Right cardiac atrium (tissue), 5 donors: ENCODE measurements at regions of chr16 and their contacts with region 1.

Region 1: DNA sequence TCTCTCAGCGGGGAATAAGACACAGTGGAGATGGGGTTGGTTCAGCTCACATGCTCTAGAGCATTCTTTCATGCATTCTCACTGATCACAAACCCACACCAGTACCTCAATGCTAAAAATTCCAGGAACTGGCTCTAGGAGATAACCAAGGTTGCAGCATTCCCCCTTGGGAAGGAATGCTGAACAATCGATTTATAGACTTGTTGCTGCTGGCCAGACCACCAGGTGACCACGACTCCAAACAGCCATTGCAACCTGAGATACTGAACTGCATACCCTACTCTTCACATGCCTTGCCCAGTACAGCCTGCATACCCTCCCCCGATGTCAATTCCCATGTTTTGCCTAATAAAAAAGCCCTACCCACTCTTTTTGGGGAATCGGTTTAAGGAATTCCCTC is 75.1 kb upstream of the GPRC5B start:
- DNase-seq: no peak
- ATAC-seq: no peak
- H3K4me3 ChIP-seq: no peak overlapping the region
- H3K27ac ChIP-seq: no peak overlapping the region
- H3K4me1 ChIP-seq: no peaks in the 10 kb centered on the region
- H3K27me3 ChIP-seq: no peaks in the 10 kb centered on the region

Region 2: GRCh38 chr16:19933740-19934139 is 26.0 kb before region 1 on chr16:
- intact Hi-C with region 1: loop called in 1 of 4 experiments (anchors 2 kb)
- DNase-seq: no peak
- ATAC-seq: no peak
- H3K4me3 ChIP-seq: no peak overlapping the region
- H3K27ac ChIP-seq: no peak overlapping the region
- H3K4me1 ChIP-seq: peaks cover 1% of the 10 kb centered on the region
- H3K27me3 ChIP-seq: no peaks in the 10 kb centered on the region

Region 3: GRCh38 chr16:20624882-20625807 is 665.4 kb after region 1 on chr16:
- intact Hi-C with region 1: no loop called
- DNase-seq: no peak
- ATAC-seq: peak in 1 of 2 donors; percentile 14
- H3K4me3 ChIP-seq: no peak overlapping the region
- H3K27ac ChIP-seq: no peak overlapping the region
- H3K4me1 ChIP-seq: no peaks in the 10 kb centered on the region
- H3K27me3 ChIP-seq: no peaks in the 10 kb centered on the region